ENCODE measurements at regions of chr7 and their contacts with region 1.

Region 1: GRCh38 chr7:87152107-87152844 is at the start of gene DMTF1:
- DNase-seq: peak; percentile 93
- ATAC-seq: peak; percentile 82
- H3K4me3 Mint-ChIP-seq: peak within 1 kb of the TSS; percentile 85
- H3K27ac Mint-ChIP-seq: peak within 1 kb of the TSS; percentile 99
- H3K4me1 Mint-ChIP-seq: peaks cover 37% of the 10 kb centered on the region
- H3K27me3 Mint-ChIP-seq: no peaks in the 10 kb centered on the region
- total RNA-seq, gene DMTF1: 60.4 to 64.9 TPM

Region 2: GRCh38 chr7:86926732-86927131 is 225.5 kb before region 1 on chr7:
- CTCF ChIA-PET with region 1: interaction called, 34 read pairs
- POLR2A ChIA-PET with region 1: interaction called, 3 read pairs
- intact Hi-C with region 1: loop called (anchors 1 kb)
- DNase-seq: peak; percentile 43
- ATAC-seq: peak; percentile 19
- H3K4me3 Mint-ChIP-seq: no peak overlapping the region
- H3K27ac Mint-ChIP-seq: no peak overlapping the region
- H3K4me1 Mint-ChIP-seq: peaks cover 8% of the 10 kb centered on the region
- H3K27me3 Mint-ChIP-seq: peaks cover 7% of the 10 kb centered on the region

Region 3: GRCh38 chr7:86978808-86979506 is 173.3 kb before region 1 on chr7:
- CTCF ChIA-PET with region 1: no interaction called
- POLR2A ChIA-PET with region 1: no interaction called
- intact Hi-C with region 1: loop called in 1 of 2 experiments (anchors 2 kb)
- DNase-seq: no peak
- ATAC-seq: peak; percentile 92
- H3K4me3 Mint-ChIP-seq: no peak overlapping the region
- H3K27ac Mint-ChIP-seq: peak overlapping the region; percentile 40
- H3K4me1 Mint-ChIP-seq: peaks cover 42% of the 10 kb centered on the region
- H3K27me3 Mint-ChIP-seq: no peaks in the 10 kb centered on the region

Region 4: DNA sequence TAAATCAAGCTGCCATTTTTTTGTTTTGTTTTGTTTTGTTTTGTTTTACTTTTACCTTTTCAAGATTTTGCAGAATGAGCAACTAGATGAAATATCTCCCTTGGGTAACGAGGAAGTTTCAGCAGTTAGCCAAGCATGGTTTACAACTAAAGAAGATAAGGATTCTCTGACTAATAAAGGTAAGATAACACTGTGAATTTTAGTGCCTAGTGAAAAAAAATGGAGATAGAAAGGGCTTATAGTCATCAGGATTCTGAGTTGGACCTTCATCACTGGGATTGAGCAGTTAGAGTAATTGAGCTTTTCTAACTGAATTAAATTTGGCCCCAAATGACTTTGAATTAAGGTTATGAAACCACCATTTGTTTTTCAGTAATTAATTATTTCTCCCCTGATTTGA is 21.2 kb after region 1 on chr7:
- CTCF ChIA-PET with region 1: interaction called, 12 read pairs
- POLR2A ChIA-PET with region 1: no interaction called
- intact Hi-C with region 1: no loop called
- DNase-seq: no peak
- ATAC-seq: no peak
- H3K4me3 Mint-ChIP-seq: no peak overlapping the region
- H3K27ac Mint-ChIP-seq: no peak overlapping the region
- H3K4me1 Mint-ChIP-seq: peaks cover 16% of the 10 kb centered on the region
- H3K27me3 Mint-ChIP-seq: no peaks in the 10 kb centered on the region

Region 5: GRCh38 chr7:87219545-87220025 is 67.3 kb after region 1 on chr7 and contains the start of gene TMEM243:
- CTCF ChIA-PET with region 1: interaction called, 12 read pairs
- POLR2A ChIA-PET with region 1: interaction called, 35 read pairs
- intact Hi-C with region 1: loop called (anchors 1 kb)
- DNase-seq: peak; percentile 91
- ATAC-seq: peak; percentile 47
- H3K4me3 Mint-ChIP-seq: peak within 1 kb of the TSS; percentile 97
- H3K27ac Mint-ChIP-seq: peak within 1 kb of the TSS; percentile 98
- H3K4me1 Mint-ChIP-seq: peaks cover 33% of the 10 kb centered on the region
- H3K27me3 Mint-ChIP-seq: peaks cover 3% of the 10 kb centered on the region
- total RNA-seq, gene TMEM243: 44.1 to 46.9 TPM

Region 6: GRCh38 chr7:87345166-87345927 is 193.1 kb after region 1 on chr7 and contains the start of gene CROT:
- CTCF ChIA-PET with region 1: no interaction called
- POLR2A ChIA-PET with region 1: no interaction called
- intact Hi-C with region 1: loop called (anchors 1 to 10 kb)
- DNase-seq: peak; percentile 97
- ATAC-seq: peak; percentile 98
- H3K4me3 Mint-ChIP-seq: peak within 1 kb of the TSS; percentile 94
- H3K27ac Mint-ChIP-seq: peak within 1 kb of the TSS; percentile 95
- H3K4me1 Mint-ChIP-seq: peaks cover 45% of the 10 kb centered on the region
- H3K27me3 Mint-ChIP-seq: no peaks in the 10 kb centered on the region
- total RNA-seq, gene CROT: 4.6 to 7.0 TPM

Region 7: GRCh38 chr7:87876040-87876868 is 724.0 kb after region 1 on chr7 and contains the starts of genes DBF4 and SLC25A40:
- CTCF ChIA-PET with region 1: no interaction called
- POLR2A ChIA-PET with region 1: no interaction called
- intact Hi-C with region 1: loop called (anchors 10 kb)
- DNase-seq: peak; percentile 97
- ATAC-seq: peak; percentile 91
- H3K4me3 Mint-ChIP-seq: peak within 1 kb of the TSS; percentile 82
- H3K27ac Mint-ChIP-seq: peak within 1 kb of the TSS; percentile 93
- H3K4me1 Mint-ChIP-seq: peaks cover 48% of the 10 kb centered on the region
- H3K27me3 Mint-ChIP-seq: no peaks in the 10 kb centered on the region
- total RNA-seq, gene DBF4: 68.6 to 86.4 TPM
- total RNA-seq, gene SLC25A40: 38.0 to 41.9 TPM

Measured in activated CD4-positive, alpha-beta T cell treated with anti-CD3 and anti-CD28 coated beads for 36 hours (primary cell).